Activated CD4-positive, alpha-beta memory T cell treated with anti-CD3 and anti-CD28 coated beads for 36 hours (primary cell): ENCODE measurements at regions of chr5 and their contacts with region 1.

Region 1: GRCh38 chr5:77030097-77031071 is at the start of gene AGGF1:
- DNase-seq: peak; percentile 96
- H3K4me3 Mint-ChIP-seq: peak within 1 kb of the TSS; percentile 88
- H3K27ac Mint-ChIP-seq: peak within 1 kb of the TSS; percentile 78
- H3K4me1 Mint-ChIP-seq: peaks cover 32% of the 10 kb centered on the region
- H3K27me3 Mint-ChIP-seq: no peaks in the 10 kb centered on the region
- total RNA-seq, gene AGGF1: 26.5 to 27.6 TPM

Region 2: GRCh38 chr5:76867827-76868693 is 162.3 kb before region 1 on chr5:
- CTCF ChIA-PET with region 1: interaction called, 5 read pairs
- POLR2A ChIA-PET with region 1: interaction called, 3 read pairs
- intact Hi-C with region 1: loop called (anchors 5 kb)
- DNase-seq: peak; percentile 74
- H3K4me3 Mint-ChIP-seq: no peak overlapping the region
- H3K27ac Mint-ChIP-seq: no peak overlapping the region
- H3K4me1 Mint-ChIP-seq: no peaks in the 10 kb centered on the region
- H3K27me3 Mint-ChIP-seq: no peaks in the 10 kb centered on the region

Region 3: DNA sequence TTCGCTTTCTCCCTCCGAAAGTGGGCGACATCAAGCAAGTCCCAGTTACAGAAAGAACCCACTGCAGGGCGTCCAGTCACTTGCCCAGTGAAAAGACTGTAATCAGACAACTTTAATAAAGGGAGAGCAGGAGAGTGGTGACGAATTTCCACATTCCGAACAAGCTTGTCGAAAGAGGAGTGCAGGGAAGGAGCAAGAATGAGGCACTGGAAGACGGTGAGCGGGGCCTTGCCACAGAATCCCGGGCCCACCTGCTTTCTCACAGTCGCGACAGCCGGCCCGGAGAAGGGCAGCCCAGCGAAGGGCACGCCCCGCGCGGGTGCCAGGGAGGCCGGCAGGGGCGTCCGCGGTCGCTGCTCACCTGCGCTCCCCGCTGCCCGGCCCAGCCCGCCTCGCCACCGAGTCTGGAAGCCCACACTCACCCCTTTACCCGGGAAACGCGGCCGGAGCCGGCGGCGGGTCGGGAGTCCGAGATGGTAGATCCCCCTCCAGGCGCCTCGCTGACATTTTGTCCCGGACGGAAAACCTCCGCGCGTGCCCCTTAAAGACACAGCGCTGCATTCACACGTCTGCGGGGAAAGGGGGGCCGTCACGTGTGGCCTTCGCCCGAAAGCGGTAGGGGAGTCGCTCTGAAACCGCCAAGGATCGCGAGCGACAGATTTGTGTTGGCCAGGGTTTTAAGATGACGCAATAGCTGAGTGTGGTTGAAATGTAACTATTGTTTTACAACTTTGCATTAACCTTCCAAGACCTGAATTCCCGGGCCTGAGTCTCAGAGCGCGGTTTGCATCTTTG is 56.5 kb after region 1 on chr5 and contains the start of gene ZBED3:
- CTCF ChIA-PET with region 1: interaction called, 3 read pairs
- POLR2A ChIA-PET with region 1: interaction called, 4 read pairs
- intact Hi-C with region 1: loop called (anchors 2 kb)
- DNase-seq: peak; percentile 68
- H3K4me3 Mint-ChIP-seq: peak within 1 kb of the TSS; percentile 80
- H3K27ac Mint-ChIP-seq: no peak within 1 kb of the TSS
- H3K4me1 Mint-ChIP-seq: peaks cover 13% of the 10 kb centered on the region
- H3K27me3 Mint-ChIP-seq: peaks cover 4% of the 10 kb centered on the region
- total RNA-seq, gene ZBED3: 0.61 to 1.2 TPM